Esophagus muscularis mucosa (tissue), 4 donors: ENCODE measurements at regions of chr19 and their contacts with region 1.

Region 1: DNA sequence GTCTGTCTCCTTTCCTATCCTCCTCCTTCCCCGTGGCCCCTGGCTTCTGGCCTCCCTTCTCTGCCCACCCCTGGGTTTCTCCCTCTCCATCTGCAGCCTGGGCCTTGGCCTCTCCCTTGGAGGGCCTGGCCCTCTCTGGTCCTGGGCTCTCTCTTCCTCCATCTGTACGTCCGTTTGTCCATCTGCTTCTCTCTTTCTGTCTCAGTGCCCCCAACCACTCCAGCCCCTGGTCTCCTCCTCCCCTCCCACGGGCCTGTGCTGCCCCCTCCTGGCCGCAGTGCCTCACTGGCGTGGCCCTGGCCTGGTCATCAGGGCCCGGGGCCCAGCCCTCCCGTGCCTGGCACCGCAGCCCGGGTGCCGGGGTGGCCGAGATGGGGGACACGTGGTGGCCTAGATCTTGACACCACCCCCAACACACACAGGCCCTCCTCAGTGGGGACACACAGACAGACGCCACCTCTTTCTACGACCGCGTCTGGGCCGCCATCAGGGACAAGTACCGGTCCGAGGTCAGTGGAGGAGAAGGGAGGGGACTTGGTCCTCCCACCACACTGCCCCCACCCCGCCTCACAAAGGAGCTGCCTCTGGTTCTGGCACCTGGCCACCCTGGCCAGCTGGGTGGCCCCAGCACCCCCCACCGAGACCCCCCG is 11.3 kb downstream of the PRKCSH start:
- DNase-seq: no peak
- H3K4me3 ChIP-seq: no peak overlapping the region
- H3K27ac ChIP-seq: no peak overlapping the region
- H3K4me1 ChIP-seq: peaks cover 0 to 4% (median 0%) of the 10 kb centered on the region in 4 donors
- H3K27me3 ChIP-seq: peaks cover 0 to 4% (median 0%) of the 10 kb centered on the region in 4 donors
- CTCF ChIP-seq: peak; percentile 64 to 85 (median 79)
- EP300 ChIP-seq: no peak
- POLR2A ChIP-seq: no peak

Region 2: GRCh38 chr19:11242864-11243797 is 203.6 kb before region 1 on chr19:
- intact Hi-C with region 1: loop called (anchors 5 kb)
- DNase-seq: peak; percentile 98
- H3K4me3 ChIP-seq: peak overlapping the region in 2 of 4 donors; percentile 2 to 9
- H3K27ac ChIP-seq: peak overlapping the region; percentile 38 to 72 (median 58)
- H3K4me1 ChIP-seq: peaks cover 22 to 30% (median 26%) of the 10 kb centered on the region in 4 donors
- H3K27me3 ChIP-seq: no peaks in the 10 kb centered on the region
- CTCF ChIP-seq: peak; percentile 70 to 95 (median 80)
- EP300 ChIP-seq: no peak
- POLR2A ChIP-seq: no peak